ENCODE measurements at regions of chr19 and their contacts with region 1.

Region 1: DNA sequence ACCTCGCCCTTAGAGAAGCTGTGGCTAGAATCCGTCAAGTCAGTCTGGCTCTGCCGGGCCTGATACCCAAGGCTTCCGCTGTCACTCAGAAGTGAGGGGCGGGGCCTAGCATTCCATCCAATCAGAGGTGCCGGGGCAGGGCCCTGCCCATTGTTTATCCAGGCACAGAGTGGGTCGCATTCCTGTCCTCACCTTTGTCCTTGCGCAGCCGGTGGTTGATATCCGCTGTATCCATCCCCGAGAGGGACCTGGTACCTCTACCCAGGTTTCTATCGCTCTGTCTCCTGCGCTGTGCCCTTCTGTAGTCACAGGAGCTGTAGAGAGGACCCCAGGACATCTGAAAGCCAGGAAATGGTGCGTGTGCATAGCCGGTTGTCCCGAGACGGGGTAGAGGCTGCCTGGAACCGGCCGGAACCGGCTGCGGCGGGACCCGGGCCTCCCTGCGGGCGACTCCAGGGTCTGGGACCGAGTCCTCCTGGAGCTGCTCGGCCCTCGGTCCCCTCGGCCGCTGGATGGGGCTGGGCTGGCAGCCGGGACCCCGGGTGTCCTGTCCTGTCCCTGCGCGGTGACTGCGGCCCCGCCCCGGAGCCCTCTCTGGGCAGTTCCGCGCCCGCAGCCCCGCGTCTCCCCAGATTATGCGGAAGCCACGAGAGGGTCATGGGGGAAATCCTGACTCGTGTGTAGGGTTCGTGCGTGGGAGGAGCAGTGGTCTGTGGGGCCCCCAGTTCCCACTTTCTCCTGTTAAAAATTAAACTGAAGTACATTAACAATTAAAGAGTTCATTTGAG is at the start of gene ZNF763:
- DNase-seq: peak; percentile 99
- H3K4me3 ChIP-seq: peak within 1 kb of the TSS; percentile 65 to 91 (median 86)
- H3K27ac ChIP-seq: peak within 1 kb of the TSS; percentile 90 to 99 (median 94)
- H3K4me1 ChIP-seq: peaks cover 18 to 27% (median 22%) of the 10 kb centered on the region in 4 donors
- H3K27me3 ChIP-seq: no peaks in the 10 kb centered on the region
- CTCF ChIP-seq: no peak
- EP300 ChIP-seq: peak; percentile 40
- POLR2A ChIP-seq: no peak
- total RNA-seq, gene ZNF763: 3.3 to 7.5 (median 4.8) TPM

Region 2: DNA sequence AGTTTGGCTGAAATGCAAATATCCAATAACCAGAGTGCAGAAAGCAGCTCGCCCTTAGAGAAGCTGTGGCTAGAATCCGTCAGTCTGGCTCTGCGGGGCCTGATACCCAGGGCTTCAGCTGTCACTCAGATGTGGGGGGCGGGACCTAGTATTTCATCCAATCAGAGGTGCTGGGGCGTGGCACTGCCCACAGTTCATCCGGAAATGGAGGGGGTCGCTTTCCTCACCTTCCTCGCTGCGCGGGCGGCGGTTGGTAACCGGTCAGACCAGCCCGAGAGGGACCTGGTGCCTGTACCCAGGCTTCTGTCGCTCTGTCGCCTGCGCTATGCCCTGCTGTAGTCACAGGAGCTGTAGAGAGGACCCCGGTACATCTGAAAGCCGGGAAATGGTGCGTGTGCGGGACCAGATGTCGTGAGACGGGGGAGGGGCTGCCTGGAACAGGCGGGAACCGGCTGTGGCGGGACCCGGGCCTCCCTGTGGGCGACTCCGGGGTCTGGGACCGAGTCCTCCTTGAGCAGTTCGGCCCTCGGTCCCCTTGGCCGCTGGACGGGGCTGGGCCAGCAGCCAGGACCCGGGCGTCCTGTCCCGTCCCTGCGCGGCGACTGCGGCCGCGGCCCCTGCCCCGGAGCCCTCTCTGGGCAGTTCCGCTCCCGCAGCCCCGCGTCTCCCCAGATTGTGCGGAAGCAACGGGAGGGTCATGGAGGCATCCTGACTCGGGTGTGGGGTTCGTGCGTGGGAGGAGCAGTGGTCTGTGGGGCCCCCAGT is 40.0 kb before region 1 on chr19 and contains the start of gene ZNF700:
- intact Hi-C with region 1: loop called (anchors 2 kb)
- DNase-seq: peak; percentile 99
- H3K4me3 ChIP-seq: peak within 1 kb of the TSS; percentile 92 to 99 (median 93)
- H3K27ac ChIP-seq: peak within 1 kb of the TSS; percentile 93 to 97 (median 94)
- H3K4me1 ChIP-seq: peaks cover 20 to 36% (median 33%) of the 10 kb centered on the region in 4 donors
- H3K27me3 ChIP-seq: no peaks in the 10 kb centered on the region
- CTCF ChIP-seq: no peak
- EP300 ChIP-seq: peak; percentile 24
- POLR2A ChIP-seq: no peak
- total RNA-seq, gene ZNF700: 7.6 to 12.0 (median 9.5) TPM

Measured in esophagus muscularis mucosa (tissue), 4 donors.